Gastrocnemius medialis (tissue), 4 donors: ENCODE measurements at regions of chr12 and their contacts with region 1.

Region 1: DNA sequence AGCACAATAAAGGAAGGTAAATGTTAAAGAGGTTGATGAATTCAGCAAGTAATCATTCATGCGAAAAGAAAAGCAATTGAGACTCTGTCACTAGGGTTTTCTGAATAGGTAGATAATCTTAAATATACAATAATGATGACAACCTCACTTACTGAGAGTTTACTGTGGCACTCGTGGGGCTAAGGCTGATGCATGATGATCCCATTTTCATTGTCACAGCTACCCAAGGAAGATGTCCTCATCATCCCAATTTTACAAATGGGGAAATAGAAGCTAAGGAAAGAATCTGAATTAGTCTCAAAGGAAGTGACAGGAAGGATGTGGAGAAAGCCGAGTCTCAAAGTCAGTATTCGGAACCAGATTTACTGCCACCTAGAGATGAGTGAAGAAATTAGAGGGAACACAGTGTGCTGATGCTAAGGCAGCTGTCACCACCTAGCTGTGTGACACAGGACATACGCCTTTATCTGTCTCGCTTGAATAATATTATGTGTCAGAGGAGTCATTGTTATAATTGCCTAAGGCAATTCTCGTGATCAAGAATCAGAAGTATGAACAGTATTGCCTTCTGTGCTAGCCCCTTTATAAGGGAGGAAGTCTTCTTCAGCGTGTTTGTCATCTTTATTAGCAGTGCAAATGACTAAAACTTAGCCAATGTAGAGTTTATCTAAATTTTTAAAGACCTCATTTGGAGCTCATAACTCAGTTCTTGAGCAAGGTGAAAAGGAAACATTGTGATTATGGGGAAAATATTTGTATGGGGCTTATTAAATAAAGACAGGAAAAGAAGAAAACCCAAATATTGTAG is 63.2 kb downstream of the ERGIC2 start:
- DNase-seq: peak; percentile 7 to 30
- ATAC-seq: peak; percentile 94 to 95
- H3K4me3 ChIP-seq: no peak overlapping the region
- H3K27ac ChIP-seq: no peak overlapping the region
- H3K4me1 ChIP-seq: peaks cover 6 to 10% of the 10 kb centered on the region in 2 donors
- H3K27me3 ChIP-seq: no peaks in the 10 kb centered on the region
- CTCF ChIP-seq: peak; percentile 19 to 67 (median 58)
- POLR2A ChIP-seq: no peak

Region 2: DNA sequence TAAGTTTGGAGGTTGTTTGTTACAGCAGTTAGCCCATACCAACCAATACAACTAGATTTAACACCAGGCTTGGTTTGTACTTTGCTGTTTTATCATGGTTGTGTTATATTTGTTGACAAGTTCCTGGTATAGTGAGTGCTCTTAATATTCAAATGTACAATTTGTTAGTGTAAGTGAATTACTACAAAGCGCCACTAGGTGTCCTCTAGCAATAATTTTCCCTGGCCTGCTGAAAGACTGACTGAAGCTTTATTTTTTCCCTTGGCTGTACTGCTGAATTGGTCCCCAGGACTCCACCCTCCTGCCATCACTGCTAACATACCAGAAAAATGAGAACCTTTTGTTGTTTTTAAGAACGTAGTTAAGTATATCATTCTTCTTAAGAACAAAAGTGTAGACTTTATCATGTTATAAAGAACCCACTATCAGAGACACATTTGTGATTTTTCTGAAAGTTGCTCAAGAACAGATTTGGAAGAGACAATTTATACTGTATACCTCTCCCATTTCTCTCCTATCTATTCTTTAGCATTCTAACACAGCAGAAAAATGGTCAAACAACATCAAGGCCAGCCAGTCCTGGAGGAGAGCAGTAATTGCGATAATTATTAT is 244.0 kb before region 1 on chr12:
- in situ Hi-C with region 1: loop called in 3 of 4 experiments (anchors 10 to 25 kb)
- intact Hi-C with region 1: loop called (anchors 5 kb)
- DNase-seq: no peak
- ATAC-seq: peak in 1 of 2 donors; percentile 39
- H3K4me3 ChIP-seq: no peak overlapping the region
- H3K27ac ChIP-seq: no peak overlapping the region
- H3K4me1 ChIP-seq: no peaks in the 10 kb centered on the region
- H3K27me3 ChIP-seq: no peaks in the 10 kb centered on the region
- CTCF ChIP-seq: peak; percentile 39 to 59 (median 43)
- POLR2A ChIP-seq: no peak

Region 3: DNA sequence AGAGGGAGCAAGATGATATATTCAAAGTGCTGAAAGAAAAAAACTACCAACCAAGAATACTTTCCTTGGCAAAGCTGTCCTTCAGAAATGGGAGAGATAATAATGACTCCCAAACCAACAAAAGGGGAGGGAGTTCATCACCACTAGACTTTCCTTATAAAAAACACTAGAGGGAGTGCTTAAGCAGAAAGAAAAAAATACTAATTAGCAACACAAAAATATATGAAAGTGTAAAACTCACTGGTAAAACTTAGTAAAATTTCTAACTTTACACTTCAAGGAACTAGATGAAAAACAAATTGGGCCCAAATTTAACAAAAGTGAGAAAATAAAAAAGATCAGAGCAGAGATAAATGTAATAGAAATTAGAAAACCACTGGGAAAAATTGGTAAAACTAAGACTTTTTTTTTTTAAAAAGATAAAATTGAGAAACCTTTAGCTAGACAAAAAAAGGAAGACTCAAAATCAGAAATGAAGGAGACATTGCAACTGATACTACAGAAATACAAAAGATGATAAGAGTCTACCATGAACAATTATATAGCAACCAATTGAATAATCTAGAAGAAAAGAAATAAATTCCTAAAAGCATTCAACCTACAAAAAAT is 229.0 kb before region 1 on chr12:
- in situ Hi-C with region 1: loop called in 3 of 4 experiments (anchors 5 to 25 kb)
- intact Hi-C with region 1: no loop called
- DNase-seq: no peak
- ATAC-seq: no peak
- H3K4me3 ChIP-seq: no peak overlapping the region
- H3K27ac ChIP-seq: no peak overlapping the region
- H3K4me1 ChIP-seq: no peaks in the 10 kb centered on the region
- H3K27me3 ChIP-seq: no peaks in the 10 kb centered on the region
- CTCF ChIP-seq: peak in 1 of 5 experiments; percentile 15
- POLR2A ChIP-seq: no peak